AG04449 (cell line): ENCODE measurements at regions of chr7 and their contacts with region 1.

Region 1: DNA sequence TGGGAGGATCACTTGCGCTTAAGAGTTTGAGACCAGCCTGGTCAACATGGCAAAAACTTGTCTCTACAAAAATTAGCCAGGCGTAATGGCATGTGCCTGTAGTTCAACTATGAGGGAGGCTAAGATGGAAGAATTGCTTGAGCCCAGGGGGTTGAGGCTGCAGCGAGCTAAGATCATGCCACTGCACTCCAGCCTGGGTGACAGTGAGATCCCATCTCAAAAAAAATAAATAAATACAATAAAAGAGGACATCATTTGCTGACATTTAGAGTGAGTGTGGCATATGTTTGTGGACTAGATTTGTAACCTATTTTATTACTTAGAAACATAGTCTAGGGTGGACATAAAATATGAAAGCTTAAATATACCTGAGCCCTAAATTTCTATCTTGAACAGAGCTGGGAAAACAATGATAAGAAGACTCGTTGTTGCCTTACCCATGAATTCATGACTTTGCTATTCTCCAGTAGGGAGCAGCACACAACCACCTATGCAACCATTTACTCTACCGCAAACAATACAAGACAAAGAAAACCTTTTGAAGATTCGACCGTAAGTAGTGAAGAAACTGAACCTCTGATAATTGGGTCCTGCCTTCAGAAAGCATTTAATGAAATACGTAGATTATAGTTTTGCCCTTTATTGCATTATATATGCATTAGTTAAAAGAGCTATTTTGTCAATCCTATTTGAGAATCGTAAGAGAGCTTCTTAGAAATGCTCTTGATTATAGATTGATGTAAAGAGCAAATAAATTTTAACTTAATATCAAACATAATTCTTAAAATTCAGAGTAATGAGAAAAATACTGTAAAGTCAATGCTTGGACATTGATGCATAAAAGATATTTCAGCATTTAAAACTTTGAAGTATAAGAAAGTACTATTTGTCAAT is 83.5 kb downstream of the GNAT3 start:
- DNase-seq: no peak
- H3K4me3 ChIP-seq: no peak overlapping the region
- CTCF ChIP-seq: peak; percentile 59

Region 2: DNA sequence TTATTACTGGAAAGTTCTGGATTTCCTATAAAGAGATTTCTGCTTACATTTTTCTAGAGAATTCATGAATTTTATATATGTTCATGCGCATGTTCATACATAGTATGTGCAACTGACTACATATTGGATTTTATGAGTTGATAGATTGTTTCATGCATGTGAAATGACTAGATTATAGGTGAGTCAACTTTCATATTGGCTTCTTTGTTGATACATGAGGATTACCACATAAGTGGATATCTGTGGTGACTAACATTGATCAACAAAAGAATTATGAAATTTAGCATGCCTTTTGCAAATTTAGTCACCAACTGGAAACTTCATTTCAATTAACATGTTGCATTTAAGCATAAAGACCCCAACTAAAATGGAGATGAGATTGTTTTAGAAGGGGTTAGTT is 15.6 kb before region 1 on chr7:
- CTCF ChIA-PET with region 1: interaction called, 32 read pairs
- POLR2A ChIA-PET with region 1: no interaction called
- DNase-seq: peak; percentile 34
- H3K4me3 ChIP-seq: no peak overlapping the region
- CTCF ChIP-seq: no peak

Region 3: DNA sequence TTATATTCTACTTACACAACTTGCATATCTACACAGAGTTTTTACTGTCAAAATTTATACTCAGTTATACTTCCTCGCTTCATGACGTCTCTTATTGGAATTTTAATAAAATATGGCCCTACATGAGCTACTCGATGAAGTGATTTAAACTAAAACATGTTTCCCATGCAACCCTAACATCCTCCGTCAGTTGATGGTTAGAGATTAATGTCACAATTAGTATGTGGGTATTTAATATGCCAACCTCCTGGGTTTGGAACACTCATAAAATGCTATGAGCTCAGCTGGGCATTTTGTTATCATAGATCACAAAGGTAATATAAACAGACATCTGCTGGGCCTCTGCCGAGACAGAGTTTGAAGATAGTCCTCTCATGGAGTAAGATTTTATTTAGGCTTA is 16.9 kb after region 1 on chr7:
- CTCF ChIA-PET with region 1: interaction called, 38 read pairs
- POLR2A ChIA-PET with region 1: no interaction called
- DNase-seq: no peak
- H3K4me3 ChIP-seq: no peak overlapping the region
- CTCF ChIP-seq: no peak

Region 4: DNA sequence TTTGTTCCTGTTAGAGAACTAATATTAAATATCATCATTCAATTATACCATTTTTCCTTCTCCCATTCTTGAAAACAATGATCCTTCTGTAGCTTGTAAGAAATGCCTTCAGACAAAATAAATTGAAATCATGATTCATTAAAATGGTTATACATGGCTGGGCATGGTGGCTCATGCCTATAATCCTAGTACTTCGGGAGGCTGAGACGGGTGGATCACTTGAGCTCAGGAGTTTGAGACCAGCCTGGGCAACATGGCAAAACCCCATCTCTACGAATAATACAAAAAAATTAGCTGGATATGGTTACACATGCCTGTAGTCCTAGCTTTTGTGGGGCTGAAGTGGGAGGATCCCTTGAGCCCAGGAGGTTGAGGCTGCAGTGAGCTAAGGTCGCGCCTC is 223.1 kb after region 1 on chr7:
- CTCF ChIA-PET with region 1: interaction called, 18 read pairs
- POLR2A ChIA-PET with region 1: no interaction called
- DNase-seq: no peak
- H3K4me3 ChIP-seq: no peak overlapping the region
- CTCF ChIP-seq: no peak

Region 5: GRCh38 chr7:80681272-80681885 is 253.0 kb after region 1 on chr7:
- CTCF ChIA-PET with region 1: interaction called, 73 read pairs
- POLR2A ChIA-PET with region 1: no interaction called
- DNase-seq: no peak
- H3K4me3 ChIP-seq: no peak overlapping the region
- CTCF ChIP-seq: peak; percentile 39

Region 6: DNA sequence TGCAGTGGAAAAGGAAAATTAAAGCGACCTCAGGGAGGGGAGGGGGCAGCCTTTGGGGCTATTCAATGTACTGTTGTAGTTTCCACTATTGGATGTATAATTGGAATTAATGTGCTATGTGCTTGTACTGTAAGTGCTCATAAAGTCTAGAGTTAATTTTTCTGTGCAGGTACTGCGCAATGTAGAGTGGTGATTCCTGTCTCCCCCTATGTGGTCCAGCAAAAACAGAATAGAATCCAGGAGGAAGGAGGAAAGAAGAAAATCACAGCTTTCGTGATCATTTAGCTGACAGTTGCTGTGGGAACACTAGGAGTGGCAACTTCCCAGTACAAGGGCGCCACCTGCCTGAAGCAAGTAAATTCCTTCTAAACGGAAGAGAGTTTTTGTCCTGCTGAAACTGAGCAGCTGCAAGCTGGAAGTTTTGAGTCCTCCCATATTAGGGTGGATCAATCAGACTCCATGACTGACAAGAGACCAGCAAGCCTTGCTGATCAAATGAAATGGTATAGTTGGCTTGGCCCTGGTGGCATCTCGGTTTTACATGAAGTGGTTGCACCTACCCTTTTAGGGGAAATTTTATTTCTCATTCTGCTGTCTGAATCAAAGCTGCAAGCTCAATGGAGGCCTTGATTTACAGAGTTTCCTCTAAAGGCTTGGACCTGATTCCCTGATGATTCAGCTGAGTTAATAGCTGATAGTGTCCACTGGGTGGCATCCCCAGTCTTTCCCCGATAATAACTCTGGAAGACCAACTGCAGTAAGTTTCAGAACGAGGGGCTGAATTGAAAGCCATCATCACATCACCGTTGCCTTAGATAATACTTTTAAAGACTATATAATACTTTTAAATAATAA is 1041.7 kb after region 1 on chr7:
- CTCF ChIA-PET with region 1: interaction called, 22 read pairs
- POLR2A ChIA-PET with region 1: no interaction called
- DNase-seq: no peak
- H3K4me3 ChIP-seq: no peak overlapping the region
- CTCF ChIP-seq: peak; percentile 72